ENCODE measurements at regions of chr15 and their contacts with region 1.

Region 1: DNA sequence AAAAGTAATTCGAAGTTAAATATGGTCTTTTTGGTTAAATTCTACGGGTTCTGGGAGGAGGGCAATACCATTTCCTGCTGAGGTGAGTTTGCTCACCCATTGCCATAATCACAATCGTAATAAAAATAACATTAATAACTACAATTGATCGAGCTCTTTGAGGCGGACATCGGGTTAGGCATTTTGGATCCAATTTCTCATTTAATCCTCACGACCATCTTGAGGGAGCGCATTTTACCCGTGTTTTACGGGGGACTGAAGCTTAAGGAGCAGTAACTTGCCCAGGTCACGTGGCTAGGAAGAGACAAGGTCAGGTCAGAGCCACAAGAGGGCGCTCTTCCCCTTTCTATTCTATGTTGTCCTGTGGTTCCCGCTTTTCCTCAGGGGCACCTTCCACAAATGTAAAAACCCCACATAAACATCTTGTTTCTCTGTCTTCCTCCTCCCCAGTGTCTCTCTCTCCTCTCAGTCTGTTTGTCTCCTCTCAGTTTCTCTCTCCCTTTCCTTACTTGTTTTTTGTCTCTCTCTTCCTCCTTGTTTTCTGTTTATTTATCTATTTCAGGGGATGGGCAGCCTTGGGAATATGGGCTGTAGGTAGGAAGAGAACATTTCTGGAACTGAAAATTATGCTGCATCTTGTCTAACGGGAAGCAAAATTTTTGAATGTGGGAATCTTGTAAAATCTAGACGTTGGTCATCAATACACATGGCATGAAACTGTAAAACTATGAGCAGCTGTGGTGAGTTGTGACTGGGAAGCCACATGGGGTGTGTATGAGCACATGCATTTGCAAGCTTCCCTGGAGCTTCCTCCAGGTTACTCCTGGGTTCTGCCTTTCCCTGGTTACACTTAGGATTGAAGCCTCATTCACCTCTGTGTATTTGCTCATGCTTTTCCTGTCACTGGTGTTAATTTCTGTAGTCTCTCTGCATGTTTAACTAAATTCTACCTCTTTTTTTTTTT is 71.0 kb downstream of the SQOR start:
- DNase-seq: peak; percentile 70
- H3K4me3 Mint-ChIP-seq: peak overlapping the region; percentile 80
- H3K27ac Mint-ChIP-seq: no peak overlapping the region
- H3K4me1 Mint-ChIP-seq: peaks cover 13% of the 10 kb centered on the region
- H3K27me3 Mint-ChIP-seq: peaks cover 9% of the 10 kb centered on the region

Region 2: GRCh38 chr15:45333550-45333949 is 372.2 kb before region 1 on chr15:
- CTCF ChIA-PET with region 1: no interaction called
- POLR2A ChIA-PET with region 1: no interaction called
- DNase-seq: no peak
- H3K4me3 Mint-ChIP-seq: no peak overlapping the region
- H3K27ac Mint-ChIP-seq: no peak overlapping the region
- H3K4me1 Mint-ChIP-seq: peaks cover 8% of the 10 kb centered on the region
- H3K27me3 Mint-ChIP-seq: peaks cover 6% of the 10 kb centered on the region

Region 3: DNA sequence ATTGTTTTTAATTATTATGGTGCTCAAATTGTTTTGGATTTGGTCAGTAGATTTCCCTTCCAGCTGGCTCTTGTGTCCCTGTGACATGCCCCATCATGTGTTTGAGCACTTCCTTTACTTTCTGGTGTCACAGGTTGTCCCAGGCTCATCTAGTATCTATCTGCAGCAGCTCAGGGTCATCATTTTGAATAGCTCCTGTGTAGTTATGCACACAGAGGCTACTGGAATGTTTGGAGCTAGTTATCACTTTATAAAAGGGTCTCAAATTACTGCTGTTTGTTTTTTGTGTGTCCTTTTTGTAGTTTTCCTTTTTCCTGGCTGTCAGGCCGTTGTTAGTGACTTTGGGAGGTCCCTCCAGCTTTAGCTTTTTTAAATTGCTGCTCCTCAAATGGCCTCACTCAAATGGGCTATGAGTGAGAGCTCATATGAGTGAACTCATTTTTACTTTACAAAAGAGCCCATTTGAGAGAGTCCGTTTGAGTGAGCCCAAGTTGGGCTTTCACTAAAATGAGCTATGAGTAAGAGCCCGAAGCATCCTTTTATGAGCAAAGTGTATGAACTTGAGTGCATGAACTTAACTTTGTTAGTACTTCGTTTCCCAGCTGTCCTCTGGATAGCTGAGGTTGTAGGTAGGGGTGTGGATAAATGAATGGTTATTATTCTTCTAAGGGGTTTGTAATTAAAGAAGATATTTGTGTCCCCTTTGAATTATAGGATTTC is 27.2 kb before region 1 on chr15:
- CTCF ChIA-PET with region 1: interaction called, 10 read pairs
- POLR2A ChIA-PET with region 1: no interaction called
- DNase-seq: no peak
- H3K4me3 Mint-ChIP-seq: no peak overlapping the region
- H3K27ac Mint-ChIP-seq: no peak overlapping the region
- H3K4me1 Mint-ChIP-seq: peaks cover 1% of the 10 kb centered on the region
- H3K27me3 Mint-ChIP-seq: no peaks in the 10 kb centered on the region

Region 4: GRCh38 chr15:45790325-45790943 is 84.6 kb after region 1 on chr15:
- CTCF ChIA-PET with region 1: interaction called, 18 read pairs
- POLR2A ChIA-PET with region 1: no interaction called
- DNase-seq: no peak
- H3K4me3 Mint-ChIP-seq: no peak overlapping the region
- H3K27ac Mint-ChIP-seq: no peak overlapping the region
- H3K4me1 Mint-ChIP-seq: no peaks in the 10 kb centered on the region
- H3K27me3 Mint-ChIP-seq: peaks cover 9% of the 10 kb centered on the region